Activated B cell treated with CpG ODN at 0.5 μM for 24 hours (primary cell): ENCODE measurements at regions of chr18 and their contacts with region 1.

Region 1: DNA sequence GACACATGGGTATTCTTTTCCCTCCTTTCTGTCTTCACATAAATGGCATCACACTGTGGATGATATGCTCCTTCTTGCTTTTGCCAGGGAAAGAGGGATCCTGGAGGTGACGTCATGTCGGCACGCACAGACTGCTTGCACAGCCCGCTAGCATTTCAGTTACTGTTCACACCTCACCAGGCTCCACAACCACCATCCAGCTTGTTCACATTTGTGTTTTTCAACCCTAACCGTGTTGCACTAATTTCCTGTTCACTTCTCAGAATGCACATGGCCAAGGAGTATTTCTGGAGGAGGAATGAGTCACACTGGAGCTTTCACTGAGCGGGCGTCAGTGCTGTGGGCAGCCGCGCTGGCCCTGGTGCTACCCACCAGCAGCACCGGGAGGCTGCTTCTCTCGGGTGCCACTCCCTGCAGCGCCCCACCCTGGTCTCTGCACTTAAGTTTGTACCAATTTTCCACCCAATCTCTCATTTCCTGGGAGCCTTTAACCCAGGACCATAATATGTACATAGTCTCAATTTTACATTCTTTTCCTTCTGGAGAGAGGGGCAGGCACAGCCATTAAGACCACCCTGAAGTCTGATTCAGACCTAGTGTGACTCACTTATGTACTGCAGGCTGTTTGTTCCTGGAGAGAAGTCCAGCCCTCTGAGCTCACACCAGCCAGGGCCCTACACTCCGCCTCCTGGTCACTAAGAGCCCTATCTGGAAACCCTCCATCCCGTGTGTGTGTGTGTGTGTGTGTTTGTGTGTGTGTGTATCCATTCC is 65.1 kb downstream of the MBP start:
- DNase-seq: no peak
- ATAC-seq: peak; percentile 32
- H3K4me3 Mint-ChIP-seq: peak overlapping the region; percentile 64
- H3K27ac Mint-ChIP-seq: peak overlapping the region; percentile 94
- H3K4me1 Mint-ChIP-seq: peaks cover 100% of the 10 kb centered on the region
- H3K27me3 Mint-ChIP-seq: no peaks in the 10 kb centered on the region
- CTCF ChIP-seq: no peak

Region 2: GRCh38 chr18:76492669-76493212 is 574.7 kb before region 1 on chr18:
- CTCF ChIA-PET with region 1: no interaction called
- POLR2A ChIA-PET with region 1: no interaction called
- intact Hi-C with region 1: loop called (anchors 5 kb)
- DNase-seq: peak; percentile 98
- ATAC-seq: peak; percentile 73
- H3K4me3 Mint-ChIP-seq: peak overlapping the region; percentile 91
- H3K27ac Mint-ChIP-seq: peak overlapping the region; percentile 88
- H3K4me1 Mint-ChIP-seq: peaks cover 36% of the 10 kb centered on the region
- H3K27me3 Mint-ChIP-seq: peaks cover 16% of the 10 kb centered on the region
- CTCF ChIP-seq: no peak

Region 3: GRCh38 chr18:77054606-77055428 is 12.7 kb before region 1 on chr18:
- CTCF ChIA-PET with region 1: interaction called, 43 read pairs
- POLR2A ChIA-PET with region 1: interaction called, 154 read pairs
- intact Hi-C with region 1: loop called (anchors 1 kb)
- DNase-seq: peak; percentile 57
- ATAC-seq: peak; percentile 65
- H3K4me3 Mint-ChIP-seq: peak overlapping the region; percentile 67
- H3K27ac Mint-ChIP-seq: peak overlapping the region; percentile 91
- H3K4me1 Mint-ChIP-seq: peaks cover 65% of the 10 kb centered on the region
- H3K27me3 Mint-ChIP-seq: no peaks in the 10 kb centered on the region
- CTCF ChIP-seq: no peak

Region 4: GRCh38 chr18:77101410-77102258 is 34.2 kb after region 1 on chr18:
- CTCF ChIA-PET with region 1: interaction called, 8 read pairs
- POLR2A ChIA-PET with region 1: interaction called, 171 read pairs
- intact Hi-C with region 1: loop called (anchors 1 kb)
- DNase-seq: no peak
- ATAC-seq: peak; percentile 68
- H3K4me3 Mint-ChIP-seq: peak overlapping the region; percentile 79
- H3K27ac Mint-ChIP-seq: peak overlapping the region; percentile 95
- H3K4me1 Mint-ChIP-seq: peaks cover 92% of the 10 kb centered on the region
- H3K27me3 Mint-ChIP-seq: no peaks in the 10 kb centered on the region
- CTCF ChIP-seq: no peak

Region 5: DNA sequence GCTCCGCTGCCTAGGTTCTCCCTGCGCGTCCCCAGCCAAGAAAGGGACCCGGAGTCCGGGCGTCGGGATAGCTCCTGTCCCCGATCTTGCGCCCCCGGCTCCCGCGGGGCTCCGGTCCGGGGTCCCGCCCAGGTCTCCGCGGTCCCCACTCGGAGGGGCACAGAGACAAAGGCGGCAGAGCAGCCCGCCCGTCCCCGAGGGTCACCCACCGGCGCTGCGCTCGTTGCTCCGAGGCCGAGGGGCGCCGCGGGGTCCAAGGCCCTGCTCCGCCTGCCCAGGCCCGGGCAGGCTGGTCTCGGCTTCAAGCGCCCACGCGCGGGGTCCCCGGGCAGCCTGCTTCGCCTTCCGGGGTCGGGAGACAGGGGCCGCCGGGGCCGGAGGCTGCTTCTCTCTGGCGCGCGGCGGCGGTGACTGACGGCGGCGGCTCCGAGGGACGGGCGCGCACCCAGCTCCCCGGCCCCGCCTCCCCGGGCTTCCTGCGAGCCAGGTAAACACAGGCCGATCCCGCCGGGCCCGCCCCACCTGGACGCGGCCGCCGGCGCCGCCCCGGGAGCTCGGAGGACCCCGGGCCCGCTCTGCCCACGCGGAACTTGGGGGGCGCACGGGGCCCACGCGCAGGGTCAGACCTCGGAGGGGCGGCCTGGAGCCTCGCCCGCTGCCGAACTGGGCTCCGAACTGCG is 65.0 kb after region 1 on chr18 and contains the start of gene MBP:
- CTCF ChIA-PET with region 1: interaction called, 12 read pairs
- POLR2A ChIA-PET with region 1: interaction called, 131 read pairs
- intact Hi-C with region 1: loop called (anchors 1 kb)
- DNase-seq: peak; percentile 72
- ATAC-seq: peak; percentile 42
- H3K4me3 Mint-ChIP-seq: peak within 1 kb of the TSS; percentile 95
- H3K27ac Mint-ChIP-seq: peak within 1 kb of the TSS; percentile 91
- H3K4me1 Mint-ChIP-seq: peaks cover 56% of the 10 kb centered on the region
- H3K27me3 Mint-ChIP-seq: no peaks in the 10 kb centered on the region
- CTCF ChIP-seq: no peak
- total RNA-seq, gene MBP: 88.0 and 92.7 TPM in 2 replicates

Region 6: GRCh38 chr18:77207540-77207939 is 140.1 kb after region 1 on chr18:
- CTCF ChIA-PET with region 1: interaction called, 14 read pairs
- POLR2A ChIA-PET with region 1: interaction called, 4 read pairs
- intact Hi-C with region 1: loop called (anchors 5 kb)
- DNase-seq: no peak
- ATAC-seq: peak; percentile 87
- H3K4me3 Mint-ChIP-seq: peak overlapping the region; percentile 64
- H3K27ac Mint-ChIP-seq: peak overlapping the region; percentile 74
- H3K4me1 Mint-ChIP-seq: peaks cover 25% of the 10 kb centered on the region
- H3K27me3 Mint-ChIP-seq: peaks cover 2% of the 10 kb centered on the region
- CTCF ChIP-seq: no peak